OCI-LY7 (cell line): ENCODE measurements at regions of chr19 and their contacts with region 1.

Region 1: GRCh38 chr19:8473648-8474476 is 28.6 kb downstream of the PRAM1 start:
- DNase-seq: peak; percentile 84
- H3K4me3 ChIP-seq: peak overlapping the region; percentile 35
- H3K27ac ChIP-seq: peak overlapping the region; percentile 92
- H3K4me1 ChIP-seq: peaks cover 45% of the 10 kb centered on the region
- CTCF ChIP-seq: no peak

Region 2: GRCh38 chr19:8444645-8445487 is 29.0 kb before region 1 on chr19 and contains the start of gene HNRNPM:
- CTCF ChIA-PET with region 1: no interaction called
- POLR2A ChIA-PET with region 1: interaction called, 4 read pairs
- intact Hi-C with region 1: loop called (anchors 1 kb)
- DNase-seq: peak; percentile 98
- H3K4me3 ChIP-seq: peak within 1 kb of the TSS; percentile 96
- H3K27ac ChIP-seq: peak within 1 kb of the TSS; percentile 83
- H3K4me1 ChIP-seq: peaks cover 40% of the 10 kb centered on the region
- CTCF ChIP-seq: no peak
- total RNA-seq, gene HNRNPM: 90.0 and 111 TPM in 2 replicates